ENCODE measurements at regions of chr16 and their contacts with region 1.

Region 1: DNA sequence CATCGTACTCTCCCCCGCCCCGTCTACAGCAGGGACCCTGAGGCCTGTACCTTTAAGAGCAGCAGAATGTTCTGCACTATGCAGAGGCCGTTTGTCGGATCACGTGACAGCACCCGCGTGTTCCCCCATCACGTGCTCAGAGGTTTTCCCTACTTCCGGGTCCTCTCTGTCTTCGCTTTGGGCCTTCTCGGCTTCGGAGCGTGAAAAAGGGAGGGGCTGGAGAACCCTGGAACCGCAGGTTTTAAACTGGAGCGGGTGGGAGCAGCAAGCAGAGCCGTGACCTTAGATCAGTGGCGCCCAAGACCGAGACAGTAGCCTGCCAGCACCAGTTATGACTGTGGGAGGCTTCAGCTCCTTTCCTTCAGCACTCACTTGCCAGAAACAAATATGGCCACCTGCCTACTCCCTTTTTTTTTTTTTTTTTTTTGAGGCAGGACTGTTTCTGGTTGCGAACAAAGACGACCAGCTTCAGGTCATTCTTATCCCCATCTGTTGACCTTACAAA is at the start of gene CLN3:
- DNase-seq: peak; percentile 94
- ATAC-seq: peak; percentile 64
- H3K4me3 Mint-ChIP-seq: peak within 1 kb of the TSS; percentile 94
- H3K27ac Mint-ChIP-seq: peak within 1 kb of the TSS; percentile 100
- H3K4me1 Mint-ChIP-seq: peaks cover 60% of the 10 kb centered on the region
- H3K27me3 Mint-ChIP-seq: no peaks in the 10 kb centered on the region
- total RNA-seq, gene CLN3: 19.0 to 24.6 TPM

Region 2: DNA sequence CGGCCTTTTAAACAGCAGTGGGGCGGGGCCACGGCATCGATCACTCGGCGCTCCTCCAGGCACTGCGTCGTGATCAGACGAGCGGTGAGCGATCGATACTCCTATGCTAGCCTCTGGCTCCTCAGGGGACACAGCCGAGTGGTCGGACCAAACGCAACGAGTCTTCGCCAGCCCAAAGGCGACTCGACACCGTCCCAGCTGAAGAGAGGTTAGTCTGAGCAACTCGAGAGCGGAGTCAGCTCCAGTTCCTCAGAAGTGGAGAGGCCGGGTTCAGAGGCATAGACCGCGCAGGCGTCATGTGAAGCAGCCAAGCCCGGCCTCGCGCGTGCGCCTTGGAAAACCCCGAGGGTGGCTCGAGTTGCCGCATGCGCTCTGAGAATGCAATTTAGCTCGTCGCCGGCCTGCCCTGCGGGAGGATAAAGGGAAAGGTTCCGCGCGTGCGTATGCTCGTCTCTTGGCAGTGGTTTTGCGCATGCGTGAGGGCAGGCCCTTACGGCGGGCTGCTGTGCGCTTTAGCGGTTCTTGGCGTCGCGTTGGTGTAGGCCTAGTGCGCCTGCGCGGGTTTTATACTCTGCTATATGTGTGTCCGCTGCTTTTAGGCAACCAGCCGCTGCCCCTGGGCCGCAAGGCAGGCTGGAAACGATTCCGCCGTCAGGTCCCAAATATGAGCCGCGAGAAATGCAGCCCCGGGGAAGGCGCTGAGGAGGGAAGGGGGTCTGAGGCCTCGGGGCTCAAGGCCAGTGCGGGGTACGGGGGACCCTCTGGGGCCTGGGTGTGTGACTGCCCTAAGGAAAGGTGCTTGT is 1288.4 kb before region 1 on chr16 and contains the start of gene KDM8:
- CTCF ChIA-PET with region 1: no interaction called
- POLR2A ChIA-PET with region 1: no interaction called
- intact Hi-C with region 1: loop called in 1 of 2 experiments (anchors 5 kb)
- DNase-seq: peak; percentile 100
- ATAC-seq: peak; percentile 90
- H3K4me3 Mint-ChIP-seq: peak within 1 kb of the TSS; percentile 89
- H3K27ac Mint-ChIP-seq: peak within 1 kb of the TSS; percentile 100
- H3K4me1 Mint-ChIP-seq: peaks cover 47% of the 10 kb centered on the region
- H3K27me3 Mint-ChIP-seq: no peaks in the 10 kb centered on the region
- total RNA-seq, gene KDM8: 9.8 to 10.4 TPM

Region 3: DNA sequence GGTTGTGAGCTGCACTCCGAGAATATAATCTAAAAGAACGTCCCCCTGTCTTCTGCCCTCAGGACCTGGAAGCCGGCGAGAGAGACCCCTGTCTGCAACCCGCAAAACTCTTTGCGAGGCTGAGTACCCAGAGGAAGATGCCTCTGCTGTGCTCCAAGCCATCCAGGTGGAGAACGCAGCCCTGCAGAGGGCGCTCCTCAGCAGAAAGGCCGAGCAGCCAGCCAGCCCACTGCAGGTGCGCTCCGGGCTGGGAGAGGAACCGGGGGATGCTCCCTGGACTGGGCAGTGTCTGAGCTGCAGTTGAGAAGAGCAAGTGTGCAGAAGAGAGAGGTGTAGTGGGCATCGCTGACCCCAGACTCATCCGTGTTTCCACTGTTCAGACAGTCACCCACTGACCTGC is 793.8 kb before region 1 on chr16:
- CTCF ChIA-PET with region 1: no interaction called
- POLR2A ChIA-PET with region 1: no interaction called
- intact Hi-C with region 1: no loop called
- DNase-seq: peak; percentile 28
- ATAC-seq: no peak
- H3K4me3 Mint-ChIP-seq: no peak overlapping the region
- H3K27ac Mint-ChIP-seq: no peak overlapping the region
- H3K4me1 Mint-ChIP-seq: no peaks in the 10 kb centered on the region
- H3K27me3 Mint-ChIP-seq: no peaks in the 10 kb centered on the region

Region 4: DNA sequence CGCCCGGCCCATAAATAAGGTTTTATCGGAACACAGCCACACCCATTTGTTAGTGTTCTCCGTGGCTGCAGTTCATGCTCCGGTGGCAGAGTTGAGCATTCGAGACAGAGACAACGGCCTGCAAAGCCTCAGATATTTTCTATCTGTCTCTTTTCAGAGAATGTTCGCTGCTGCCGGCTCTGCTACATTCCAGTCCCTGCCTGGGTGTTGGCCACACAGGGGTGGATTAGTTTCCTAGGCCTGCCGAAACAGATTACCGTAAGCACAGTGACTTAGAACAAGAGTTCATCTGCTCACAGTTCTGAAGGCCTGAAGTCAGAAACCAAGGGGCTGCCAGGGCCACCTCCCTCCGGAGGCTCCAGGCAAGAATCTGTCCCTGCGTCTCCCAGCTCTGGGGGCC is 409.4 kb before region 1 on chr16:
- CTCF ChIA-PET with region 1: no interaction called
- POLR2A ChIA-PET with region 1: no interaction called
- intact Hi-C with region 1: no loop called
- DNase-seq: no peak
- ATAC-seq: no peak
- H3K4me3 Mint-ChIP-seq: no peak overlapping the region
- H3K27ac Mint-ChIP-seq: no peak overlapping the region
- H3K4me1 Mint-ChIP-seq: no peaks in the 10 kb centered on the region
- H3K27me3 Mint-ChIP-seq: no peaks in the 10 kb centered on the region

Region 5: GRCh38 chr16:28140788-28141618 is 351.0 kb before region 1 on chr16:
- CTCF ChIA-PET with region 1: no interaction called
- POLR2A ChIA-PET with region 1: no interaction called
- intact Hi-C with region 1: loop called in 1 of 2 experiments (anchors 1 kb)
- DNase-seq: peak; percentile 85
- ATAC-seq: peak; percentile 82
- H3K4me3 Mint-ChIP-seq: peak overlapping the region; percentile 60
- H3K27ac Mint-ChIP-seq: peak overlapping the region; percentile 99
- H3K4me1 Mint-ChIP-seq: peaks cover 85% of the 10 kb centered on the region
- H3K27me3 Mint-ChIP-seq: no peaks in the 10 kb centered on the region

Region 6: GRCh38 chr16:28211712-28212534 is 280.1 kb before region 1 on chr16 and contains the start of gene XPO6:
- CTCF ChIA-PET with region 1: no interaction called
- POLR2A ChIA-PET with region 1: no interaction called
- intact Hi-C with region 1: loop called in 1 of 2 experiments (anchors 1 kb)
- DNase-seq: peak; percentile 100
- ATAC-seq: peak; percentile 82
- H3K4me3 Mint-ChIP-seq: peak within 1 kb of the TSS; percentile 96
- H3K27ac Mint-ChIP-seq: peak within 1 kb of the TSS; percentile 99
- H3K4me1 Mint-ChIP-seq: peaks cover 32% of the 10 kb centered on the region
- H3K27me3 Mint-ChIP-seq: no peaks in the 10 kb centered on the region
- total RNA-seq, gene XPO6: 241 to 368 TPM

Region 7: DNA sequence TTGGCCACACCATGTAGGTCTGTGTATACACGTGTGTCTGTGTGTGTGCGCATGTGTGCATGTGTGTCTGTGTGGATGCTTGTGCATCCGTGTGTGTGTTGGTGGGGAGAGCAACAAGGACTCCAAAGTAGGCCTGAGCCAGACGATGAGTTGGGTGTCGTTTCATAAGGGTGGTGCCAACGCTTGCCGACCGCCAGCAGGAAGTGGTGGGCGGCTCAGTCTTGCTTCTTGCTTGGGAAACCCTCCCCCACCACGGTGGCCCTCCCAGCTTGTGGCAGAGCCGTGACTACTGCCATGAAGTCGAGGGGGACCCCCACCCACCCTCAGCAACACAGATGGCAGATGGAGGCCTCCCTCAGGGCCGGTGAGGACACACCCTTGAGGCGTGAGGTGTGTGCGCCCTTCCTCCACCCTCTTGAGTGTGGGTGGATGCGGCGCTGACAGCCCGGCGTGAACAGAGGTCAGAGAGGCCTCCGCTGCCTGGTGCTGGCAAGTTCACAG is 182.2 kb before region 1 on chr16:
- CTCF ChIA-PET with region 1: no interaction called
- POLR2A ChIA-PET with region 1: no interaction called
- intact Hi-C with region 1: loop called in 1 of 2 experiments (anchors 5 kb)
- DNase-seq: peak; percentile 92
- ATAC-seq: peak; percentile 91
- H3K4me3 Mint-ChIP-seq: peak overlapping the region; percentile 6
- H3K27ac Mint-ChIP-seq: peak overlapping the region; percentile 91
- H3K4me1 Mint-ChIP-seq: peaks cover 48% of the 10 kb centered on the region
- H3K27me3 Mint-ChIP-seq: no peaks in the 10 kb centered on the region

Region 8: DNA sequence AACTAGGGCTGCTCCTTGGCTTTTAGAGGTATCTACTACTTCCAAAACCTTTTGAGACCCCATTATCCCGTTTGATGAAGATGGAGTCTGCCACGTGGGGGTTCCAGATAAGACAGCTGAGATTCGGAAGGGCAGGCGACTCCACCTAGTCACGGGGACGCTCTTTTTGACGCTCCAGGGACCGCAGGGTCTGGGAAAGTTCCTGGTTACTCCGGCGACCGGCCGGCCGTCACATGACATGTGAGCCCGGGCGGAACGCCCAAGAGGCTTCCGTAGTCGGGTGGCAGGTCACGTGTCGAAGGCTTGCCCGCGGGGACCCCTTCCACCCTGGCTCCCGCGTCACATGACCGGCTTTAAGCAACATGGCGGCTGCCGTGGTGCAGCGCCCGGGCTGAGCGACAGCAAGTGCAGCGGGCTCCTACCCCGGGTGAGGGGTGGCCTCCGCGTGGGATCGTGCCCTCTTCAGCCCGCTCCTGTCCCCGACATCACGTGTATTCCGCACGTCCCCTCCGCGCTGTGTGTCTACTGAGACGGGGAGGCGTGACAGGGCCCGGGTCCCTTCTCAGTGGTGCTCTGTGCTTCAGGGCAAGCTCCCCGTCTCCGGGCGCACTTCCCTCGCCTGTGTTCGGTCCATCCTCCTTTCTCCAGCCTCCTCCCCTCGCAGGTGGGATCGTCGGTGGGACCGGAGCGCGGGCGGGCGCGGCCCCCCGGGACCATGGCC is 482.6 kb after region 1 on chr16 and contains the start of gene SPNS1:
- CTCF ChIA-PET with region 1: no interaction called
- POLR2A ChIA-PET with region 1: no interaction called
- intact Hi-C with region 1: loop called in 1 of 2 experiments (anchors 2 kb)
- DNase-seq: peak; percentile 98
- ATAC-seq: peak; percentile 94
- H3K4me3 Mint-ChIP-seq: peak within 1 kb of the TSS; percentile 98
- H3K27ac Mint-ChIP-seq: peak within 1 kb of the TSS; percentile 93
- H3K4me1 Mint-ChIP-seq: peaks cover 30% of the 10 kb centered on the region
- H3K27me3 Mint-ChIP-seq: no peaks in the 10 kb centered on the region
- total RNA-seq, gene SPNS1: 12.7 to 14.2 TPM

Measured in activated CD4-positive, alpha-beta T cell treated with anti-CD3 and anti-CD28 coated beads for 36 hours (primary cell).